CD8-positive, alpha-beta T cell (primary cell): ENCODE measurements at regions of chr14 and their contacts with region 1.

Region 1: GRCh38 chr14:52695481-52696091 is at the start of gene ERO1A:
- DNase-seq: peak; percentile 20 to 78 (median 61)
- ATAC-seq: peak; percentile 61
- H3K4me3 ChIP-seq: peak within 1 kb of the TSS; percentile 63 to 89
- H3K4me3 Mint-ChIP-seq: peak within 1 kb of the TSS; percentile 97
- H3K27ac ChIP-seq: peak within 1 kb of the TSS; percentile 69 to 78
- H3K27ac Mint-ChIP-seq: peak within 1 kb of the TSS; percentile 96
- H3K4me1 ChIP-seq: peaks cover 34% of the 10 kb centered on the region
- H3K4me1 Mint-ChIP-seq: peaks cover 43% of the 10 kb centered on the region
- H3K27me3 ChIP-seq: no peaks in the 10 kb centered on the region
- H3K27me3 Mint-ChIP-seq: no peaks in the 10 kb centered on the region
- CTCF ChIP-seq: no peak
- total RNA-seq, gene ERO1A: 55.3 to 55.4 TPM

Region 2: GRCh38 chr14:52650774-52651173 is 44.8 kb before region 1 on chr14:
- CTCF ChIA-PET with region 1: no interaction called
- POLR2A ChIA-PET with region 1: no interaction called
- intact Hi-C with region 1: no loop called
- DNase-seq: no peak
- ATAC-seq: no peak
- H3K4me3 ChIP-seq: no peak overlapping the region
- H3K4me3 Mint-ChIP-seq: no peak overlapping the region
- H3K27ac ChIP-seq: no peak overlapping the region
- H3K27ac Mint-ChIP-seq: no peak overlapping the region
- H3K4me1 ChIP-seq: no peaks in the 10 kb centered on the region
- H3K4me1 Mint-ChIP-seq: no peaks in the 10 kb centered on the region
- H3K27me3 ChIP-seq: no peaks in the 10 kb centered on the region
- H3K27me3 Mint-ChIP-seq: no peaks in the 10 kb centered on the region
- CTCF ChIP-seq: no peak

Region 3: GRCh38 chr14:52678591-52678990 is 17.0 kb before region 1 on chr14:
- CTCF ChIA-PET with region 1: interaction called, 3 read pairs
- POLR2A ChIA-PET with region 1: interaction called, 5 read pairs
- intact Hi-C with region 1: loop called in 1 of 2 experiments (anchors 2 kb)
- DNase-seq: peak in 2 of 9 experiments; percentile 40 to 51
- ATAC-seq: peak; percentile 61
- H3K4me3 ChIP-seq: no peak overlapping the region
- H3K4me3 Mint-ChIP-seq: no peak overlapping the region
- H3K27ac ChIP-seq: no peak overlapping the region
- H3K27ac Mint-ChIP-seq: no peak overlapping the region
- H3K4me1 ChIP-seq: no peaks in the 10 kb centered on the region
- H3K4me1 Mint-ChIP-seq: peaks cover 2% of the 10 kb centered on the region
- H3K27me3 ChIP-seq: no peaks in the 10 kb centered on the region
- H3K27me3 Mint-ChIP-seq: no peaks in the 10 kb centered on the region
- CTCF ChIP-seq: peak; percentile 59

Region 4: GRCh38 chr14:52706724-52707706 is 11.4 kb after region 1 on chr14 and contains the start of gene PSMC6:
- CTCF ChIA-PET with region 1: no interaction called
- POLR2A ChIA-PET with region 1: interaction called, 5 read pairs
- intact Hi-C with region 1: loop called (anchors 1 kb)
- DNase-seq: peak; percentile 91 to 96 (median 95)
- ATAC-seq: peak; percentile 98
- H3K4me3 ChIP-seq: peak within 1 kb of the TSS; percentile 69 to 88
- H3K4me3 Mint-ChIP-seq: peak within 1 kb of the TSS; percentile 96
- H3K27ac ChIP-seq: peak within 1 kb of the TSS; percentile 66 to 84
- H3K27ac Mint-ChIP-seq: peak within 1 kb of the TSS; percentile 94
- H3K4me1 ChIP-seq: peaks cover 20% of the 10 kb centered on the region
- H3K4me1 Mint-ChIP-seq: peaks cover 33% of the 10 kb centered on the region
- H3K27me3 ChIP-seq: no peaks in the 10 kb centered on the region
- H3K27me3 Mint-ChIP-seq: no peaks in the 10 kb centered on the region
- CTCF ChIP-seq: no peak
- total RNA-seq, gene PSMC6: 108 to 122 TPM

Region 5: GRCh38 chr14:52735921-52736489 is 40.4 kb after region 1 on chr14:
- CTCF ChIA-PET with region 1: no interaction called
- POLR2A ChIA-PET with region 1: interaction called, 4 read pairs
- intact Hi-C with region 1: loop called in 1 of 2 experiments (anchors 5 kb)
- DNase-seq: no peak
- ATAC-seq: no peak
- H3K4me3 ChIP-seq: no peak overlapping the region
- H3K4me3 Mint-ChIP-seq: no peak overlapping the region
- H3K27ac ChIP-seq: peak overlapping the region in 1 of 2 experiments; percentile 14
- H3K27ac Mint-ChIP-seq: peak overlapping the region; percentile 86
- H3K4me1 ChIP-seq: peaks cover 54% of the 10 kb centered on the region
- H3K4me1 Mint-ChIP-seq: peaks cover 73% of the 10 kb centered on the region
- H3K27me3 ChIP-seq: no peaks in the 10 kb centered on the region
- H3K27me3 Mint-ChIP-seq: no peaks in the 10 kb centered on the region
- CTCF ChIP-seq: no peak